Colonic mucosa (tissue), 4 donors: ENCODE measurements at regions of chr12 and their contacts with region 1.

Region 1: GRCh38 chr12:95582230-95583058 is 31.2 kb upstream of the USP44 start:
- DNase-seq: no peak
- H3K4me3 ChIP-seq: no peak overlapping the region
- H3K27ac ChIP-seq: no peak overlapping the region
- H3K4me1 ChIP-seq: no peaks in the 10 kb centered on the region
- H3K27me3 ChIP-seq: no peaks in the 10 kb centered on the region
- CTCF ChIP-seq: no peak

Region 2: GRCh38 chr12:95815635-95816212 is 233.3 kb after region 1 on chr12:
- intact Hi-C with region 1: loop called (anchors 5 kb)
- DNase-seq: no peak
- H3K4me3 ChIP-seq: no peak overlapping the region
- H3K27ac ChIP-seq: no peak overlapping the region
- H3K4me1 ChIP-seq: no peaks in the 10 kb centered on the region
- H3K27me3 ChIP-seq: no peaks in the 10 kb centered on the region
- CTCF ChIP-seq: peak; percentile 62